Activated CD8-positive, alpha-beta T cell treated with anti-CD3 and anti-CD28 coated beads, Interleukin-2, amount 10 ng/mL, durations not matched to agents 7 days and 5 days (primary cell): ENCODE measurements at regions of chr1 and their contacts with region 1.

Region 1: DNA sequence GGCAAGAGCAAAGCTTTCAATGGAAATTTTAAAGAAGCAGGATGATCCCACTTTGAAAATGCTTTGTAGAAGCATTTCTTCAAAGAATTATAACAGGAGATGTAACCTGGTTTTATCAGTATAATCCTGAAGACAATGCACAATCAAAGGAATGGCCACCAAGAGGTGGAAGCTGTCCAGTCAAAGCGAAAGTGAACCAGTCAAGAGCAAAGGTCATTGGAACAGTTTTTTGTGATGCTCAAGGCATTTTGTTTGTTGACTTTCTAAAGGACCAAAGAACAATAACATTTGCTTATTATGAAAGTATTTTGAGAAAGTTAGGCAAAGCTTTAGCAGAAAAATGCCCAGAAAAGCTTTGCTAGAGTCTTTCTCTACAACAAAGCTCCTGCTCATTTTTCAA is 5.5 kb upstream of the CD84 start:
- DNase-seq: no peak
- ATAC-seq: no peak
- H3K4me3 Mint-ChIP-seq: no peak overlapping the region
- H3K27ac Mint-ChIP-seq: no peak overlapping the region
- H3K4me1 Mint-ChIP-seq: peaks cover 32% of the 10 kb centered on the region
- H3K27me3 Mint-ChIP-seq: no peaks in the 10 kb centered on the region

Region 2: DNA sequence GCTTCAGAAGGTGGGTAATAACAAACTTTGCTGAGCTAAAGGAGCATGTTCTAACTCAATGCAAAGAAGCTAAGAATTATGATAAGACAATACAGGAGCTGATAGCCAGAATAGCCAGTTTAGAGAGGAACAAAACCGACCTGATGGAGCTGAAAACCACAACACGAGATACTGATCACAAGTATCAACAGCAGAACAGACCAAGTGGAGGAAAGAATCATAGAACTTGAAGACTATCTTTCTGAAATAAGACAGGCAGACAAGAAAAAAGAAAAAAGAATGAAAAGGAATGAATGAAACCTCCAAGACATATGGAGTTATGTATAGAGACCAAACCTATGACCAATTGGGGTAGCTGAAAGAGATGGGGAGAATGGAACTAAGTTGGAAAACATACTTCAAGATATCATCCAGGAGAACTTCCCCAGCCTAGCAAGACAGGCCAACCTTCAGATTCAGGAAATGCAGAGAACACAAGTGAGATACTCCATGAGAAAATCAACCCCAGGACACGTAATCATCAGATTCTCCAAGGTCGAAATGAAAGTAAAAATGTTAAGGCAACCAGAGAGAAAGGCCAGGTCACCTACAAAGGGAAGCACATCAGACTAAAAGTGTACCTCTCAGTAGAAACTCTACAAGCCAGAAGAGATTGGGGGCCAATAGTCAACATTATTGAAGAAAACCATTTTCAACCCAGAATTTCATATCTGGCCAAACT is 26.0 kb before region 1 on chr1:
- CTCF ChIA-PET with region 1: interaction called, 31 read pairs
- POLR2A ChIA-PET with region 1: interaction called, 9 read pairs
- DNase-seq: no peak
- ATAC-seq: peak; percentile 27
- H3K4me3 Mint-ChIP-seq: peak overlapping the region; percentile 51
- H3K27ac Mint-ChIP-seq: peak overlapping the region; percentile 53
- H3K4me1 Mint-ChIP-seq: peaks cover 42% of the 10 kb centered on the region
- H3K27me3 Mint-ChIP-seq: no peaks in the 10 kb centered on the region